ENCODE measurements at regions of chr3 and their contacts with region 1.

Region 1: DNA sequence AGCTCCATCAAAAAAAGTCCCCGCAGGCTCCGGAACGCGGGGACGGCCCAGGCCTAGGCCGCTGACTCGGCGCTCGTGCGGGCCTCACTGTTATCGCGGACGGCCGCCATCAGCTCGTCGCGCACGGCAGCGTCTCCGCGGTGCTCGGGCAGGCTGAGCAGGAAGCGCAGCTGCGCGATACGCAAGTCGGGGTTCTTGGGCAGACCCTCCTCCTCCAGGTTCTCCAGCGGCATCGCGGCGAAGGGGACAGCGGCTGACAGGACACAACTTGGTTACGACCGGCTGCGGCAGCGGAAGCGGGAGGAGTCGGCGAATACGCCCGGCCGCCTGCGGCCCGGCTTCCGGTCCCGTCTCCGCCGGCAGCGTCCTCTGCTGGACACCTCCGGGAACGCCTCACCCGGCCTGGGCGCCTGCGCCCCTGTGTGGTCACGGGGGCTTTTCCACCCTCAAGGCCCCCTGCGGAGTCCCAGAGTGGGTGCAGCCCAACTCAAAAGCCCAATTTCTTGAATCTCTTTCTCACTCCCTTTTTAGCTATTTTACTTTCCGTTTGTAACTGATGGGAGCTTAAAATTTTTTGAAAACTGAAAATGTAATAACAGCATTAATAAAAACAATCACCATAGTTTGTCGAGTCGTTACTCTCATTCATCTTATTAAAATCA is at the start of gene PSMD6:
- DNase-seq: peak; percentile 55 to 91
- H3K4me3 ChIP-seq: peak within 1 kb of the TSS; percentile 91
- H3K27ac ChIP-seq: peak within 1 kb of the TSS; percentile 54
- H3K4me1 ChIP-seq: peaks cover 7% of the 10 kb centered on the region
- H3K27me3 ChIP-seq: no peaks in the 10 kb centered on the region
- CTCF ChIP-seq: peak; percentile 88
- total RNA-seq, gene PSMD6: 52.0 and 68.8 TPM in 2 replicates

Region 2: DNA sequence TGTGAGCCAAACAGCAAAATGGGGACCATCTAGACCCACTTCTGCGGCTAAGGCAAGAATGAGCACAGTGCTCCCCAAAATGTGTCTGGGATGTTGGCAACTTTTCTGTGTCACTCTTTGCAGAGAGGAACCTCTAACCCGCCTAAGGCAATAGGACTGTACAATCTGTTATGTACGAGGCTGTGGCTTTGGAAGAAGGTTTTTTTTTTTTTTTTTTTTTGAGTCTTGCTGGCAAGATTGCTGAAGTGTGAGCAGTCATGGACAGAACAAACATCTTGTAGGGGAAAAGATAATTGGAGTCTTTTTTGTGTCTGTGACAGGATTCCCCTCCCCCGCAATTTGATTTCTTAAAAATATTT is 1657.2 kb before region 1 on chr3:
- CTCF ChIA-PET with region 1: interaction called, 13 read pairs
- POLR2A ChIA-PET with region 1: no interaction called
- intact Hi-C with region 1: no loop called
- DNase-seq: no peak
- H3K4me3 ChIP-seq: no peak overlapping the region
- H3K27ac ChIP-seq: no peak overlapping the region
- H3K4me1 ChIP-seq: no peaks in the 10 kb centered on the region
- H3K27me3 ChIP-seq: peaks cover 7% of the 10 kb centered on the region; the same call in 1 of the 2 replicates
- CTCF ChIP-seq: no peak

Region 3: DNA sequence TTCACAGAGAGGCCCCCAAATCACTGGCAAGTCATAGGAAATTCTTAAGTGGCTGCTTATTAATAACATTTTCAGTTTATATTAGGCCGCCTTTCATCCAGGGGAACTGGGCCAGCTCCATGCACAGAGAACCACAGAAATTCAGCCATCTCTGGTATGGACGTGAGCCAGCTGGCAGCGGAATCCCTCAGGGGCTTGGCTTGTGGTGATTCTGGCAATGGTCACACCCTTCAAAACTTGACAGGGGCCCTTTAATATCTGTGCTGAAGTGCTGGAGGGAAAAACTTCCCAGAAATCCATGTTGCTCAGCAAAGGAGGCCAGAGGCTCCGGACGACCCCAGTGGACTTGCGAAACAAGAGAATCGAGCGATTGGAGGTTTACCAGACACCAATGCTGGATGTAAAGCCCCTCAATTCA is 190.7 kb after region 1 on chr3:
- CTCF ChIA-PET with region 1: no interaction called
- POLR2A ChIA-PET with region 1: no interaction called
- intact Hi-C with region 1: no loop called
- DNase-seq: peak in 1 of 2 experiments; percentile 67
- H3K4me3 ChIP-seq: no peak overlapping the region
- H3K27ac ChIP-seq: no peak overlapping the region
- H3K4me1 ChIP-seq: peaks cover 11% of the 10 kb centered on the region
- H3K27me3 ChIP-seq: no peaks in the 10 kb centered on the region
- CTCF ChIP-seq: no peak

Region 4: GRCh38 chr3:64259636-64260035 is 236.3 kb after region 1 on chr3:
- CTCF ChIA-PET with region 1: no interaction called
- POLR2A ChIA-PET with region 1: interaction called, 10 read pairs
- intact Hi-C with region 1: no loop called
- DNase-seq: no peak
- H3K4me3 ChIP-seq: no peak overlapping the region
- H3K27ac ChIP-seq: no peak overlapping the region
- H3K4me1 ChIP-seq: no peaks in the 10 kb centered on the region
- H3K27me3 ChIP-seq: no peaks in the 10 kb centered on the region
- CTCF ChIP-seq: no peak

Region 5: DNA sequence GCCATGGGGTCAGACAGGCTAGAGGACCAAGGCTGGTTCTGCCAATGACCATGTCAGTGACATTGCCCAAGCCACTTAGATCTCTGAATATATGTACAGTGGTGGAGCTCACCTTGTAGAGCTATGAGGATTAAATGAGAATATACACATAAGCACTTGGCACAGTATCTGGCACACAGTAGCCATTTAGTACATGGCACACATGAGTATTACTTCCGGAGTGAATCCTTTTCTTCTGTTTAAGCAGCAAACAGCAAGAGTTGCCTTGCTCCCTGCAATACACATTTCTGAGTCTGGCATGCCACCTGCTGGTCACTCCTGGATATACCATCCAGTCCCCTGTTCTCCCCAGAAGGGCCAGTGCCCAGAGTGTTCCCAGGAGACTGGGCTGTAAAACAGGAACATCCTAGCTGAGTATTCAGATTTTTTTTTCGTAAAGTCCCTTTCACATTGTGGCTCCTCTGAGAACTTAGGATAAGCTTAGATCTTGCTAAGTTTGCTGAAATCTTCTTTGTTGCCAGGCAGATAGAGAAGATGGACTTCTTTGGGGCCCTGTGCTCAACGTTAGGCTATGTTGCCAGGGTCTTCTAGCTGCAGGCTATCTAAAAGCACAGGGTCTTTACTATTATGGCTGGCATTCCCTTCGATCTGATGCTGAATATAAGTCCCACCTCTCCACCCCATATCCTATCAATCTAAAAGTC is 461.1 kb after region 1 on chr3:
- CTCF ChIA-PET with region 1: no interaction called
- POLR2A ChIA-PET with region 1: interaction called, 3 read pairs
- intact Hi-C with region 1: loop called (anchors 1 kb)
- DNase-seq: peak; percentile 60 to 75
- H3K4me3 ChIP-seq: no peak overlapping the region
- H3K27ac ChIP-seq: no peak overlapping the region
- H3K4me1 ChIP-seq: no peaks in the 10 kb centered on the region
- H3K27me3 ChIP-seq: no peaks in the 10 kb centered on the region
- CTCF ChIP-seq: peak; percentile 87